A549 (cell line): ENCODE measurements at regions of chr11 and their contacts with region 1.

Region 1: DNA sequence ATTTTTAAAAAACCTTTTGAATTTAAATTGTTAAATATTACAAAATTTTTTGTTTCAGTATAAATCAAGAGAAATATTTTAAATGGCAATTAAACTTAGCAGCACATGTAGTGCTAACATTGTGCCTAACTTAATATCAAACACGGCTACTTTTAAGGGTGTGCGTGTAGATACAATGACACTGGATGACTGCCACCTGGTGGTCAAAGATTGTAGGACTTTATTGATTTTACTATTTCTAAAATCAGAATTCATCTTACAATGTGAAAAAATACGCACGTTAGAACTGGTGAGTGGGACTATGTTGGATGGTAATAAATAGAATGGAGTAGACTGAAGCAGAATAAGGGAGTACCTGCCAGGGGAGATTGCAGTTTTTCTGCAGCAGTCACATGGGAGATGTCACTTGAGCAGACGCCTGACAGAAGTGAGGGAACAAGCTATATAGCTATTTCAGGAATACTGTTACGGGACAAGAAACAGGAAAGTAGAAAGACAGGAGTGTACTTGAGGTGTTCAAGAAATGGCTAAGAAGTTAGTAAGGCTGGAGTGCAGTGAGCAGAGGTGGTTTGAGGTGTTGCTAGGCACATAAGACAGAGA is 52.9 kb downstream of the UVRAG start:
- DNase-seq: peak; percentile 43 to 52
- ATAC-seq: peak; percentile 56 to 76; a peak in 5 of 6 replicates
- H3K4me3 ChIP-seq: no peak overlapping the region
- H3K27ac ChIP-seq: no peak overlapping the region
- H3K4me1 ChIP-seq: no peaks in the 10 kb centered on the region
- CTCF ChIP-seq: peak; percentile 93
- EP300 ChIP-seq: no peak
- POLR2A ChIP-seq: no peak
- RAD21 ChIP-seq: peak; percentile 71 to 72

Region 2: DNA sequence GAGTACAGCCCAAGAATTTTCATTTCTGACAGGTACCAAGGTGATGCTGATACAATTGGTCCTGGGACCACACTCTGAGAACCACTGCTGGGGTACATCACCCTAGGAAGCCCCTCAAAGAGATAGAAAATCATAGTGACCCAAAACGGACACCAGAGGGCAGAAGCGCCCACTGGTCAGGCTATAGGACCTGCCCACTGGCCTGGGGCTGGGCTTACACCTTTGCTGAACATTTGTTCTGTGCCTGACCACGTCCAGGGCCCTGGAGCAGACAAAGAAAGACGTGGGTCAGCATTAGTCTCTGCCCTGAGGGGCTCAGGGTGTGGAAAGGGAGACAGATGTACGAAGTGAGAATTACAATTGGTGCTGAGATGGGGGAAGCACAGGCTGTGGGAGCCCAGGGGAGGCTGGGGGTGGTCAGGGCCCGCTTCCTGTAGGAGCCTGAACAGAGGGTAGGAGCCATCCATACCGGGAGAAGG is 320.3 kb before region 1 on chr11:
- CTCF ChIA-PET with region 1: interaction called, 14 read pairs
- POLR2A ChIA-PET with region 1: no interaction called
- DNase-seq: peak; percentile 53 to 89
- ATAC-seq: peak; percentile 87 to 96
- H3K4me3 ChIP-seq: no peak overlapping the region
- H3K27ac ChIP-seq: peak overlapping the region in 1 of 2 experiments; percentile 43; a peak in 1 of 6 replicates
- H3K4me1 ChIP-seq: no peaks in the 10 kb centered on the region; the same call in 2 of the 3 replicates
- CTCF ChIP-seq: peak; percentile 89
- EP300 ChIP-seq: no peak
- POLR2A ChIP-seq: no peak
- RAD21 ChIP-seq: peak; percentile 88 to 89

Region 3: DNA sequence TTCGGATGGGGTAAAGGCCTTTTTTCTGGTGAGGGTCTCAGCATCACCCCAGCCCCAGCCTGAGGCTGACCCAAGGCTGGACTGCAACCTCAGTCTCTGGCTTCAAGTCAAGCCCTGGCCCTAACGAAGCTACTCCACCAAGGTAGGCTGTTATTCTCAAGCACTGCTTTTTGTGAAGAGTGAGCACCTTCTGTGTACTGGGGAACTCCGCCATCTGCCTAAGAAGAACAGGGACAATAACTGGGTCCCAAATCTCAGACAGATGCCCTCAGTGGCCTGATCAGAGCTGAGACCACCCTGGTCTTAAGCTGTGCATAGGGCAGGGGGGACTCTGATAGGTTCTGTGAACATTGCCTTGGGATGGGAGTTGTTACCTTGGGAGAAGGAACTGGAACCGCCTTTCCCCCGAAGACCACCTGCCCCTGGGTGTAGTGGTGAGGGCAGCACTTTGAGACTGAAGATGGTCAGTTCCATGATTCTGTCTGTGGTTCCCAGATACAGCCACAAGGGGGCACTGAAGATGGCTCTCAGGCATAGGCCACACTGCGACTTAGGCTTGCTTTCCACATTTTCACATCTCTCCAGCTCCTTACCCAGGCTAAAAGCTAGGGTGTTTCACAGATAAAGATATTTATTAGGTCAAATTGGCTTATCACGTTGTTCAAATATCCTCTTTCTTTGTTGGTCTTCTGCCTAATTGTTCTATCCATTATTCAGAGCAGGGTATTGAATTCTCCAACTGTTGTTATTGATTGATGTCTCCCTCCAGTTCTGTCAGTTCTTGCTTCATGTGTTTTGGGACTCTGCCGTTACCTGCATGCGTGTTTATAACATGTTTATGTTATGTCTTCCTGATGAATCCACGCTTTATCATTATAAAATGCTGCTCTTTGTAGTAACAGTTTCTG is 64.7 kb before region 1 on chr11:
- CTCF ChIA-PET with region 1: interaction called, 46 read pairs
- POLR2A ChIA-PET with region 1: no interaction called
- DNase-seq: peak; percentile 68 to 82
- ATAC-seq: peak; percentile 87 to 98
- H3K4me3 ChIP-seq: no peak overlapping the region
- H3K27ac ChIP-seq: no peak overlapping the region
- H3K4me1 ChIP-seq: no peaks in the 10 kb centered on the region
- CTCF ChIP-seq: peak; percentile 84
- EP300 ChIP-seq: no peak
- POLR2A ChIP-seq: no peak
- RAD21 ChIP-seq: peak; percentile 76 to 83

Region 4: DNA sequence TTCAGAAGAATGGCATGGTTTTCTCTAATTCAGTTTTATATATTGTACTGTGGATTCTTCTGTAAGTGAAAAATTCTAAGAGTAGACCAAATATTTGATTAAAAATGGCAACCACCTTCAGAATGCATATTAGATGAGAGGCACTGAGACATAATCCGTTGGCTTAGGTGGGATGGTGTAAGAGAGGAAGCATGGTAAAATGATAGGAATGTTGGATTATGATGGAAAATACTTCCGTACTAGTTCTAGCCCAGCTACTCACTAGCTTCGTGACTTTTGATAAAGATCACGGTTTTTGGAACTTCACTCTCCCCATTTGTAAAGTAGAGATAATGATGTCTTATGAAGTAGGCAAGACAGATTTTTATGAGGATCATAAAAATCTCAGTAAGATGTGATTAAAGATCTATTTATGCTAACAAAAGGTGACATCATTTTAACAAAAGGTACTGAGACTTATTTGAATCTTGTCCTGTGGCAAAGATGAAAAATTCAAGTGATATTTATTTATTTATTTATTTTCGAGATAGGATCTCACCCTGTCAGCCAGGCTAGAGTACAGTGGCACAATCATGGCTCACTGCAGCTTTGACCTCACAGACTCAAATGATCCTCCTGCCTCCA is 15.4 kb before region 1 on chr11:
- CTCF ChIA-PET with region 1: interaction called, 37 read pairs
- POLR2A ChIA-PET with region 1: no interaction called
- DNase-seq: no peak
- ATAC-seq: no peak
- H3K4me3 ChIP-seq: no peak overlapping the region
- H3K27ac ChIP-seq: no peak overlapping the region
- H3K4me1 ChIP-seq: no peaks in the 10 kb centered on the region
- CTCF ChIP-seq: no peak
- EP300 ChIP-seq: no peak
- POLR2A ChIP-seq: no peak
- RAD21 ChIP-seq: no peak

Region 5: GRCh38 chr11:75896843-75897419 is 29.1 kb after region 1 on chr11:
- CTCF ChIA-PET with region 1: interaction called, 12 read pairs
- POLR2A ChIA-PET with region 1: no interaction called
- DNase-seq: peak; percentile 25 to 41
- ATAC-seq: peak; percentile 50; a peak in 4 of 6 replicates
- H3K4me3 ChIP-seq: no peak overlapping the region
- H3K27ac ChIP-seq: no peak overlapping the region
- H3K4me1 ChIP-seq: no peaks in the 10 kb centered on the region
- CTCF ChIP-seq: peak; percentile 81
- EP300 ChIP-seq: no peak
- POLR2A ChIP-seq: no peak
- RAD21 ChIP-seq: peak; percentile 87 to 91

Region 6: DNA sequence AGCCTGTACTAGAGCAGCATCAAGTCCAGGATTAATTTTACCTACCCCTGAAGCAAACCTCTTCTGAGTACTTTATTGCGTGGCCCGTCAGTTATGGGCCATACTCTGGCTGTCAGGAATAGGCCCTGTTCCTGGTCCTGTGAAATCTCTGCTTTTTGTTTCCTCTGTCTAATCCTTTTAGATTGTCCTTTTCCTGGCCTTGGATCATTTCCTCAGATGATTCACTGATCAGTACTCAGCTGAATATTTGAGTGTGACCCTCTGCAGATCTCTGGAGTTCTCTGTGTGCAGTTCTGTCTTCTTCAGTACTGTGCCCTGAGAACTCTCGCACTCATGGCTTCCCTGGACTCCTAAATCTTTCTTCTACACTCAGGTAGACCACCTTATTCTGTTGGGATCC is 70.7 kb after region 1 on chr11:
- CTCF ChIA-PET with region 1: no interaction called
- POLR2A ChIA-PET with region 1: no interaction called
- DNase-seq: no peak
- ATAC-seq: no peak
- H3K4me3 ChIP-seq: no peak overlapping the region
- H3K27ac ChIP-seq: no peak overlapping the region
- H3K4me1 ChIP-seq: no peaks in the 10 kb centered on the region
- CTCF ChIP-seq: no peak
- EP300 ChIP-seq: no peak
- POLR2A ChIP-seq: no peak
- RAD21 ChIP-seq: no peak